Right cardiac atrium (tissue), 5 donors: ENCODE measurements at regions of chr11 and their contacts with region 1.

Region 1: DNA sequence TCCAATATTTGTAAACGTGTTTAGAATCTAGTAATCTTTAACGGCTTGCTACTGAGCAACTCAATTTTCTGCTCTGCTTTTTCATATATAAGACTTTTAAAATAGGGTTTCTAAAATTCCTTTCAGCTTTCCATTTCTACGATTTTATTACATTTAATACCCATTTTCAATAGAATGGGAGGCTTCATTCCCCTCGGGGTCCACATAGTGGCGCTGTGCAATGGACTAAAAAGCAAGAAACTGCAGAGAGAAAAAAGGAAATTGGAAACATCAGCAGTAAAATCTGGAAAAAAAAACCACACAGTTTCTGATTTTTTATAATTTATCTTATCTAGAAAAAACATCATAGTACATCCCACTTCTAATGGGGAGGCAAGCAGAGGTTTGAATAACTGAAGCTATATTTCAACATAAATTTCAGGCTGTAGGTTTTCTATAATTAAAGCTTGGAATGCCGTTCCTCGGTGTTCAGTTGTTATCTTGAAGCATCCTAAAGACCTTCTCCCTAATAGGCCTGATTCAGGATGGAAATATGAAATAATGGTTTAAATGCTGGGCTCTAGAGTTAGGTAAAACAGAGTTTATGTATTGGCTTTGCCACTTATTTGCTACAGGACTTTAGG is 18.7 kb upstream of the JHY start:
- DNase-seq: peak in 2 of 3 donors; percentile 32 to 75
- ATAC-seq: no peak
- H3K4me3 ChIP-seq: no peak overlapping the region
- H3K27ac ChIP-seq: no peak overlapping the region
- H3K4me1 ChIP-seq: no peaks in the 10 kb centered on the region
- H3K27me3 ChIP-seq: no peaks in the 10 kb centered on the region

Region 2: DNA sequence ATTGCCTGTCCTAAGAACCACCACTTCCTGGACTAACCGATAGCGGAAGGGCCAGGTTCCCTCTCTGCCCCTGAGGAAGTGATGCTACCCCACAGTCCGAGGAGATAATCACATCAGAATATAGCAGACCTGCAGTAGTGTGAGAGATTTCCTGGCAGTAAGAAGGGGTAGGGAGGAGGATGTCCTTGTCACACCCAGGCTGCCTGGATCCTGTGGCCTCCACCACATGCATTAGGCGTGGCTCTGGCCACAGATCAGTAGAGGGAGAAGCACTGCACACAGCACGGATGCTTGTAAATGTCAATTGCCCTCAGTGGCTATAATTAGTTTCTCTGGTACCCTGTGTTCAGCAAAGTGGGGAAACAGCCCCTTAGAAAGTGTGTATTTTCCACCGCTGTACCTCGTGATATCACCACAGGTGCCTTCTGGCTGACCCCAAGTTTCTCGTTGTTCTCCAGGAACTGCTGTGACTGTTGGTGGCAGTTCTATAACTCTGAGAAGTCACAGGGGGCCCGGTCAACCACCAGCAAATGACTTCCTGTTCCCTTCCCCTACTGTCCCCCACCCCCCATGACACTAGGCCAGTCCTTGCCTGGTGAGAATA is 146.4 kb before region 1 on chr11:
- intact Hi-C with region 1: no loop called
- DNase-seq: no peak
- ATAC-seq: peak; percentile 44 to 52
- H3K4me3 ChIP-seq: no peak overlapping the region
- H3K27ac ChIP-seq: no peak overlapping the region
- H3K4me1 ChIP-seq: peaks cover 5% of the 10 kb centered on the region
- H3K27me3 ChIP-seq: no peaks in the 10 kb centered on the region

Region 3: GRCh38 chr11:123020968-123021367 is 157.2 kb after region 1 on chr11:
- intact Hi-C with region 1: loop called (anchors 2 to 5 kb)
- DNase-seq: no peak
- ATAC-seq: no peak
- H3K4me3 ChIP-seq: no peak overlapping the region
- H3K27ac ChIP-seq: no peak overlapping the region
- H3K4me1 ChIP-seq: no peaks in the 10 kb centered on the region
- H3K27me3 ChIP-seq: no peaks in the 10 kb centered on the region

Region 4: DNA sequence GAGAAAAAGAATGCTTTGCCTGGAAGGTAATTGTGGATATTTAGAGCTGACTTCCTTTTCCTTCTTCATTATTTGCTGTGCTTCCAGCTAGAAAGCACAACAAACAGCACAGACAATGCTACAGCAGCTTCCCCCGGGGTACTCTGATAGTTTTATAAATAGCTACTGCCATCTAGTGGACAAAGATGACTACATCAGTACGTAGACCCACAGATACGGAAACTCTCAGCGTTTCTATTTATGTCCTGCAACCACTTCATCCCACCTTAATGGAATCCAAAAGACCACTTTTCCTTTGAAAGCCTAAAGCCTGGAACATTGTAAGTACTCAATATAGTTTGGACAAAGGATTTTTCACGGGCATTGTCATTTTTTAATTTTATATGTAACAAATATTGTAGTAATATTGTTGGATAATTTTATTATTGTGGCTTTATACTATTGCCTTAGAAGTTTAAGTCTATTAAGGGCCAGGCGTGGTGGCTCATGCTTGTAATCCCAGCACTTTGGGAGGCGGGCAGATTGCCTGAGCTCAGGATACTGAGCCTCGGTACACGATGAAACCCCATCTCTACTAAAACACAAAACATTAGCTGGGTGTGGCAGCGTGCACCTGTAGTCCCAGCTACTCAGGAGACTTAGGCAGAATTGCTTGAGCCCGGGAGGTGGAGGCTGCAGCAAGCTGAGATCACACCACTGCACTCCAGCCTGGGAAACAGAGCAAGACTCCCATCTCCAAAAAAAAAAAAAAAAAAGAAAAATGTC is 190.7 kb after region 1 on chr11:
- intact Hi-C with region 1: loop called in 2 of 4 experiments (anchors 10 kb)
- DNase-seq: no peak
- ATAC-seq: peak; percentile 84 to 85
- H3K4me3 ChIP-seq: no peak overlapping the region
- H3K27ac ChIP-seq: no peak overlapping the region
- H3K4me1 ChIP-seq: peaks cover 5% of the 10 kb centered on the region
- H3K27me3 ChIP-seq: no peaks in the 10 kb centered on the region